GM13976 (cell line): ENCODE measurements at regions of chr11 and their contacts with region 1.

Region 1: GRCh38 chr11:109697140-109697843 is 275.3 kb downstream of the C11orf87 start:
- DNase-seq: peak; percentile 27
- CTCF ChIP-seq: peak; percentile 69

Region 2: DNA sequence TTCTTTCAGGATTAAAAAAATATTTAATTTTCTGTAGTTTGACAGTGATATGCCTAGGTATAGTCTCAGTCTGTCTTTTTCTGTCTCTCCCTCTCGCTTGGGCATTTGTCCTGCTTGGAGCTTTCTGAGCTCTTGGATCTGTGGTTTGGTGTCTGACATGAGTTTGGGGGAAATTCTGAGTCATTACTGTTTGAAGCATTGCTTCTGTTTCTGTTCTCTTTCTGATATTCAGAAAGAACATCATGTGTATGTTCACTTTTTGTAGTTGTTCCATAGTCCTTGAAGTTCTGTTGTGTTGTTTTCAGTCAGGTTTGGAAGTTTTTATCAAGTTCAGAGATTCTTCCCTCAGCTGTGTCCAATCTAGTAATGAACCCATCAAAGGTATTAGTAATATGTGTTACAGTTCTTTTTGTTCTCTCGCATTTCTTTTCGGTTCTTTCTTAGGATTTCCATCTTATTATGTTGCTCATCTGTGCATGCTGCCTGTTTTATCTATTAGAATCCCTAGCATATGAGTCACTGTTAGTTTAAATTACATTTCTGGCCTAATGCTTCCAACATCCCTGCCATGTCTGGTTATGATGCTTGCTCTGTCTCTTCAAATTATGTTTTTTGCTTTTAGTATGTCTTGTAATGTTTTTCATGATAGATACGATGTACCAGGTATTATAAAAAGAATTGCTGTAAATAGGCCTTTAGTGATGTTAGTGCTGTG is 984.1 kb before region 1 on chr11:
- in situ Hi-C with region 1: loop called (anchors 25 kb)
- DNase-seq: peak; percentile 37
- CTCF ChIP-seq: no peak

Region 3: DNA sequence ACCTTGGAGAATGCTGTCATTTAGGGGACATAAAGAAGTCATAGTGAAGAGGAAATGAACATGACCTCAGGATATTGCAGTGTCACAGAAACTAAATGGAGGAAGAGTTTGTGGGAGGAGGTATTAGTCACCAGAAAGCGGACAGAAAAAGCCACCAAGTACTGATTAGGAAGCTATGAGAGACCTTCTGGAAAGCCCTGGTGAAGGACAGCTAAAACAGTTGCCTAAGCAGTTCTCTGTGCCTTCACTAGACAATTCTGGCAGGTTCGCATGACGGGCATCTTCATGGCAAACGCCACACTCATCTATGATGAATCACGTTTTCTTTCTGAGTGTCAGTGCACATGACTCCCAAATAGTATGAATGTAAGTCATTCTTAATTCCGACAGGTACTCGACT is 50.5 kb after region 1 on chr11:
- in situ Hi-C with region 1: no loop called
- DNase-seq: peak; percentile 2
- CTCF ChIP-seq: no peak

Region 4: DNA sequence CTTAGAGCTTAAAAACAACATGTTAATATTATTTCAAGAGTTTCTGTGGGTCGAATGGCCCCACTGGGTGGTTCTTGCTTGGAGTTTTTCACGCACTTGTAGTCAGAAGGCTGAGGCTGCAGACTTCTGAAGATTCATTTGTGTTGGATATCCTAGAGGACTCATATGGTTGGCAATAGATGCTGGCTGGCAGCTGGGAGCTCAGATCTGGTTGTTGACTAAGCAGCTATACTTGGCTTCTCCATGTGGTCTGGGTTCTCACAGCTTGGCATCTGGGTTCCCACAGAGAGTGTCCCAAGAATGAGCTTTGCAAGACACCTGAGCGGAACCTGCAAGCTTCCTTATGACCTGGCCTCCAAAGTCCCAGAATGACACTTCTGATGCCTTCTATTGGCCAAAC is 232.0 kb after region 1 on chr11:
- in situ Hi-C with region 1: no loop called
- DNase-seq: no peak
- CTCF ChIP-seq: no peak